Activated B cell treated with CpG ODN at 0.5 μM for 24 hours (primary cell): ENCODE measurements at regions of chr11 and their contacts with region 1.

Region 1: DNA sequence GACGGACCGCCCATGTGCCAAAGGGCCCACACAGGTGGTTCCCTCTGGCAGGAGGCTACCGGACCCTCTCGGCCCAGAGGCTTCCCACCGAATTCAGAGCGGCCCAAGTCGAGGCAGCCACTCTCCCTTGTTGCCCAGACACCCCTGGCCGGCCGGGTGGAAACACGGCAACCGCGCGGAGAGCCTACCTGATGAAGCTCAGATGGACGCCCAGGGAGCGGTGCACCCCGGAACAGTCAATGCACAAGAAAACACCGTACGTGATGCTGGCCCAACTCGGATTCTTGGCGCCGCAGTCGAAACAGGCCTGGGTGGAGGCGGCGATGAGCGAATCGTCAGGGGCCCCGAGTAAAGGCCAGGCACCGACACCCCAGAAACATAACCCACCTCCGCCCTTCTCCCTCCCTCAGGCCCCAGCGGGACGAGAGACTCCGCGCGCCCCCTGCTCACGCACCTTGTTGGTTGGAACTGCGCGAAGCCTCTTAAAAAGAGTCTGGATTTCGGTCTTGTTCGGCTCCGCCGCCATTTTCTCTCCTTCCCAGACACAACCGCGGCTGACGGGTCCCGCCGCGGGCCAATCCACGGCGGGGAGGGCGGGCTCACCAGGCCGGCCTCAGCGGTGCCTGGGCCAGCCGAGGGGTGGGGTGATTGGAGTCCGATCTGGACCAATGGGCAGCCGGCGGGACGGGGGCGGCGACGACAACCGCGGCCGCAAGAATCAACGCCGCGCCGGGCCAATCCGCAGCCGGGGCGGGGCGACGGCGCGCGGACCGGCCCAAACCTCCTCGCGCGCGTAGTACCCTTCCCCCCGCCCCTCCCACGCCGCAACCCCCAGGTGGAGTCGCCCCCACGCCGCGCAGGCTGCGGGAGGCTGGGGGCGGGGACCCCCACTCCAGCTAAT is at the start of gene ARFGAP2:
- DNase-seq: peak; percentile 92
- ATAC-seq: peak; percentile 93
- H3K4me3 Mint-ChIP-seq: peak within 1 kb of the TSS; percentile 98
- H3K27ac Mint-ChIP-seq: peak within 1 kb of the TSS; percentile 99
- H3K4me1 Mint-ChIP-seq: peaks cover 35% of the 10 kb centered on the region
- H3K27me3 Mint-ChIP-seq: no peaks in the 10 kb centered on the region
- CTCF ChIP-seq: no peak
- total RNA-seq, gene ARFGAP2: 145 and 176 TPM in 2 replicates

Region 2: GRCh38 chr11:46700241-46701077 is 476.1 kb before region 1 on chr11 and contains the starts of genes ARHGAP1 and ZNF408:
- CTCF ChIA-PET with region 1: no interaction called
- POLR2A ChIA-PET with region 1: no interaction called
- intact Hi-C with region 1: loop called (anchors 1 kb)
- DNase-seq: peak; percentile 96
- ATAC-seq: peak; percentile 87
- H3K4me3 Mint-ChIP-seq: peak within 1 kb of the TSS; percentile 99
- H3K27ac Mint-ChIP-seq: peak within 1 kb of the TSS; percentile 95
- H3K4me1 Mint-ChIP-seq: peaks cover 51% of the 10 kb centered on the region
- H3K27me3 Mint-ChIP-seq: no peaks in the 10 kb centered on the region
- CTCF ChIP-seq: no peak
- total RNA-seq, gene ARHGAP1: 47.6 and 58.0 TPM in 2 replicates
- total RNA-seq, gene ZNF408: 15.6 and 16.1 TPM in 2 replicates

Region 3: GRCh38 chr11:46972343-46972742 is 204.2 kb before region 1 on chr11:
- CTCF ChIA-PET with region 1: no interaction called
- POLR2A ChIA-PET with region 1: no interaction called
- intact Hi-C with region 1: no loop called
- DNase-seq: no peak
- ATAC-seq: no peak
- H3K4me3 Mint-ChIP-seq: no peak overlapping the region
- H3K27ac Mint-ChIP-seq: no peak overlapping the region
- H3K4me1 Mint-ChIP-seq: no peaks in the 10 kb centered on the region
- H3K27me3 Mint-ChIP-seq: no peaks in the 10 kb centered on the region
- CTCF ChIP-seq: no peak

Region 4: DNA sequence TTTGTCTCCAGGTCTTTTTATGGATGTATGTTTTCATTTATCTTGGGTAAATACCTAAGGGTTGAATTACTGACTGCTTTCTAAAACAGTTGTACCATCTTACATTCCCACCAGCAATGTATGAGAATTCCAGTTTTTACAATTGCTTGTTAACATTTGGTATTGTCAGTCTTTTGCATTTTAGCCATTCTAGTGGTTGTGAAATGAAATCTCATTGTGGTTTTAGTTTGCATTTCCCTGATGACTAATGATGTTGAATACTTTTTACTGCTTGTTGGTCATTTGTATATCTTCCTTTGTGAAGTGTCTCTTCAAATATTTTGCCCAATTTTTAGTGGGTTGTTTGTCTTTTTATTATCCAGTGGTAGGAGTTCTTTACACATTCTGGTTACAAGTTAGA is 92.7 kb before region 1 on chr11:
- CTCF ChIA-PET with region 1: no interaction called
- POLR2A ChIA-PET with region 1: no interaction called
- intact Hi-C with region 1: no loop called
- DNase-seq: no peak
- ATAC-seq: no peak
- H3K4me3 Mint-ChIP-seq: no peak overlapping the region
- H3K27ac Mint-ChIP-seq: no peak overlapping the region
- H3K4me1 Mint-ChIP-seq: no peaks in the 10 kb centered on the region
- H3K27me3 Mint-ChIP-seq: no peaks in the 10 kb centered on the region
- CTCF ChIP-seq: no peak

Region 5: DNA sequence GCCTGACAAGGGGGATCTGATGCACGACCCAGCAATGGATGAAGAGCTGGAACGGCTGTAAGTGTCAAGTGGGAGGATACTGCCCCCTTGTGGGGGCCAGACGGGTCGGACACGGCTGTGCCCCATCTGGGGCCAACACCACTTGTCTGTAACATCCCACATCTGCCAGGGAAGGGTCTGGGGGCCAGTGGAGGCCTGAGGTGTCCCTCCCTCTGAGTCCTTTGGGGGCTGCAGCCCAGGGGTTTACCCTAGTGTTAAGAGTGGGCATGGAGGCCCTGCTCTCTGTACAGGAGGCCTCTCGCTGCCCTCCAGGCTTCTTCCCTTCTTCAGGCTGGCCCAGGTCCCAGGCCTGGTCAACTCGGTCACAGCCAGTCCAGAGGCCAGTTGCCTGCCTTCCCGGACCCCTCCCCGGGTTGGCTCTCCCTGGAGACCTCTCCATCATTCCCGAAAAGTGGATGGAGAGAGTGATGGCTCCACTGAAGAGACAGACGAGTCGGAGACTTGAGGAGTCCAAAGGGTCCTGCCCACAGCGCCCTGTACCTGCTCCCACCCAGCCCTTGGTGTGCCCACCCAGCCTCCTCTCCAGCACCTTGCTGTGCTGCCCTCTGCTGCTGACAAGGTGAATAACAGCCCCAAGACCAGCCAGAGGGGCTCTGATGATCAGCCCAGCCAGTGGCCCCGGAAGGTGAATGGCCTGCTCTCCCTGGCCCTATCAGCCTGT is 15.3 kb before region 1 on chr11:
- CTCF ChIA-PET with region 1: interaction called, 3 read pairs
- POLR2A ChIA-PET with region 1: interaction called, 4 read pairs
- intact Hi-C with region 1: loop called (anchors 1 kb)
- DNase-seq: peak; percentile 47
- ATAC-seq: peak; percentile 84
- H3K4me3 Mint-ChIP-seq: no peak overlapping the region
- H3K27ac Mint-ChIP-seq: no peak overlapping the region
- H3K4me1 Mint-ChIP-seq: no peaks in the 10 kb centered on the region
- H3K27me3 Mint-ChIP-seq: no peaks in the 10 kb centered on the region
- CTCF ChIP-seq: peak; percentile 46

Region 6: GRCh38 chr11:47259178-47259977 is 82.8 kb after region 1 on chr11:
- CTCF ChIA-PET with region 1: interaction called, 40 read pairs
- POLR2A ChIA-PET with region 1: interaction called, 7 read pairs
- intact Hi-C with region 1: loop called (anchors 1 kb)
- DNase-seq: no peak
- ATAC-seq: peak; percentile 87
- H3K4me3 Mint-ChIP-seq: no peak overlapping the region
- H3K27ac Mint-ChIP-seq: no peak overlapping the region
- H3K4me1 Mint-ChIP-seq: peaks cover 2% of the 10 kb centered on the region
- H3K27me3 Mint-ChIP-seq: no peaks in the 10 kb centered on the region
- CTCF ChIP-seq: no peak

Region 7: DNA sequence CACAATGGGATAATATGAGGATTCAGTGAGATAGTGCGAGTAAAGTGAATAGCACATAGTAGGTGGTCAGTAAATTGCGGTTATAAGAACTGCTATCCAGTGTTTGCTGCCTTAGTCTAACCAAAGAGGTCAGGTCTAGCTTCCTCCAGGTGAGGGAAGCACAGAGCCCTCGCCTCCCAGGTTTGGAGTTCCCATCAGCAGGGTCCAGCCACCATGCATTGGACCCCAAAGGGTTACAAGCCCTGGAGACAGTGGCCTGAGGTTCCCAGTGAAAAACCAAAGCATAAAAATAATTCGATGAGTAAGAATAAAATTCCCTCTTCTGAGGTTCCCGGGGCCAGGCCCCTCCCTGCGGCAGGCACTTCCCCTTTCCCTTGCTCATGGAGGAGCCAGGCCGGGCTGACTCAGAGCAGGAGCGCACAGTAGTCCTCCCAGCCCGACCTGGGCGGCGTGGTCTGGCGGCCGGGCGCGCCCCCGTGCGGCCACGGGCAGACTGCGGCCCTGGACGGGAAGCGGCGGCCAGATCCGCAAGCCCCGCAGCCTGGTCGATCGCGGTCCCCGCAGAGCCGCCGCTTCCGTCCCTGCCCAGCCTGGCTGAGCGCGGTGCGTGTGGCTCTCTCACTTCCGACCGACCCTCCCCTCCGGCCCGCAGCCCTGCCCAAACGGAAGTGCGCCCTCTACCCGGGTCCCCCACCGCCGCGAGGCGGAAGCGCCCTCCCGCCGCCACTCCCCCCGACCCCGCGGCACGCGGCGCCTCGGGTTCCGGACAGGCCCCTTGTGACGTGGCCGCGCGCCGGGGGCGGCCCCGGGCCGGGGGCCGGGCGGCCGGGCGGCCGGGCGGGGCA is 231.4 kb after region 1 on chr11 and contains the start of gene SLC39A13:
- CTCF ChIA-PET with region 1: interaction called, 4 read pairs
- POLR2A ChIA-PET with region 1: no interaction called
- intact Hi-C with region 1: loop called (anchors 1 kb)
- DNase-seq: peak; percentile 98
- ATAC-seq: peak; percentile 85
- H3K4me3 Mint-ChIP-seq: peak within 1 kb of the TSS; percentile 90
- H3K27ac Mint-ChIP-seq: peak within 1 kb of the TSS; percentile 95
- H3K4me1 Mint-ChIP-seq: peaks cover 24% of the 10 kb centered on the region
- H3K27me3 Mint-ChIP-seq: no peaks in the 10 kb centered on the region
- CTCF ChIP-seq: no peak
- total RNA-seq, gene SLC39A13: 27.5 and 28.2 TPM in 2 replicates

Region 8: GRCh38 chr11:47847892-47848635 is 671.5 kb after region 1 on chr11 and contains the start of gene NUP160:
- CTCF ChIA-PET with region 1: no interaction called
- POLR2A ChIA-PET with region 1: no interaction called
- intact Hi-C with region 1: loop called (anchors 2 kb)
- DNase-seq: peak; percentile 92
- ATAC-seq: peak; percentile 83
- H3K4me3 Mint-ChIP-seq: peak within 1 kb of the TSS; percentile 98
- H3K27ac Mint-ChIP-seq: peak within 1 kb of the TSS; percentile 97
- H3K4me1 Mint-ChIP-seq: peaks cover 67% of the 10 kb centered on the region
- H3K27me3 Mint-ChIP-seq: no peaks in the 10 kb centered on the region
- CTCF ChIP-seq: no peak
- total RNA-seq, gene NUP160: 53.2 and 70.8 TPM in 2 replicates